CD4-positive, alpha-beta T cell (primary cell): ENCODE measurements at regions of chr19 and their contacts with region 1.

Region 1: GRCh38 chr19:2269244-2269947 is 12.6 kb downstream of the PEAK3 start:
- DNase-seq: peak; percentile 98 to 99 (median 99)
- ATAC-seq: peak; percentile 77
- H3K4me3 ChIP-seq: peak overlapping the region; percentile 98
- H3K4me3 Mint-ChIP-seq: peak overlapping the region; percentile 97
- H3K27ac ChIP-seq: peak overlapping the region; percentile 50 to 94
- H3K27ac Mint-ChIP-seq: peak overlapping the region; percentile 97
- H3K4me1 ChIP-seq: peaks cover 50% of the 10 kb centered on the region
- H3K4me1 Mint-ChIP-seq: peaks cover 30% of the 10 kb centered on the region
- H3K27me3 ChIP-seq: peaks cover 0 to 6% of the 10 kb centered on the region in 2 experiments
- H3K27me3 Mint-ChIP-seq: no peaks in the 10 kb centered on the region
- CTCF ChIP-seq: no peak

Region 2: GRCh38 chr19:1406774-1407499 is 862.5 kb before region 1 on chr19:
- CTCF ChIA-PET with region 1: no interaction called
- POLR2A ChIA-PET with region 1: no interaction called
- intact Hi-C with region 1: loop called in 1 of 2 experiments (anchors 10 kb)
- DNase-seq: peak; percentile 98 to 100 (median 99)
- ATAC-seq: peak; percentile 79
- H3K4me3 ChIP-seq: peak overlapping the region; percentile 51
- H3K4me3 Mint-ChIP-seq: peak overlapping the region; percentile 92
- H3K27ac ChIP-seq: peak overlapping the region; percentile 52 to 73
- H3K27ac Mint-ChIP-seq: peak overlapping the region; percentile 78
- H3K4me1 ChIP-seq: peaks cover 56% of the 10 kb centered on the region
- H3K4me1 Mint-ChIP-seq: peaks cover 46% of the 10 kb centered on the region
- H3K27me3 ChIP-seq: peaks cover 0 to 11% of the 10 kb centered on the region in 2 experiments
- H3K27me3 Mint-ChIP-seq: no peaks in the 10 kb centered on the region
- CTCF ChIP-seq: peak; percentile 62

Region 3: GRCh38 chr19:2157452-2157851 is 111.9 kb before region 1 on chr19:
- CTCF ChIA-PET with region 1: interaction called, 5 read pairs
- POLR2A ChIA-PET with region 1: no interaction called
- intact Hi-C with region 1: loop called in 1 of 2 experiments (anchors 2 kb)
- DNase-seq: no peak
- ATAC-seq: no peak
- H3K4me3 ChIP-seq: no peak overlapping the region
- H3K4me3 Mint-ChIP-seq: no peak overlapping the region
- H3K27ac ChIP-seq: no peak overlapping the region
- H3K27ac Mint-ChIP-seq: no peak overlapping the region
- H3K4me1 ChIP-seq: peaks cover 5% of the 10 kb centered on the region
- H3K4me1 Mint-ChIP-seq: no peaks in the 10 kb centered on the region
- H3K27me3 ChIP-seq: no peaks in the 10 kb centered on the region
- H3K27me3 Mint-ChIP-seq: no peaks in the 10 kb centered on the region
- CTCF ChIP-seq: no peak

Region 4: GRCh38 chr19:2253106-2254053 is 16.0 kb before region 1 on chr19:
- CTCF ChIA-PET with region 1: interaction called, 10 read pairs
- POLR2A ChIA-PET with region 1: interaction called, 195 read pairs
- intact Hi-C with region 1: loop called (anchors 1 to 2 kb)
- DNase-seq: peak in 10 of 14 experiments; percentile 55 to 76 (median 64)
- ATAC-seq: peak; percentile 47
- H3K4me3 ChIP-seq: peak overlapping the region; percentile 50
- H3K4me3 Mint-ChIP-seq: peak overlapping the region; percentile 80
- H3K27ac ChIP-seq: no peak overlapping the region
- H3K27ac Mint-ChIP-seq: peak overlapping the region; percentile 64
- H3K4me1 ChIP-seq: peaks cover 67% of the 10 kb centered on the region
- H3K4me1 Mint-ChIP-seq: peaks cover 17% of the 10 kb centered on the region
- H3K27me3 ChIP-seq: peaks cover 23 to 26% of the 10 kb centered on the region in 2 experiments
- H3K27me3 Mint-ChIP-seq: no peaks in the 10 kb centered on the region
- CTCF ChIP-seq: peak; percentile 70

Region 5: GRCh38 chr19:2328401-2329148 is 59.2 kb after region 1 on chr19 and contains the starts of genes LSM7 and SPPL2B:
- CTCF ChIA-PET with region 1: no interaction called
- POLR2A ChIA-PET with region 1: interaction called, 4 read pairs
- intact Hi-C with region 1: loop called in 1 of 2 experiments (anchors 5 kb)
- DNase-seq: peak; percentile 86 to 98 (median 92)
- ATAC-seq: peak; percentile 69
- H3K4me3 ChIP-seq: peak within 1 kb of the TSS; percentile 96
- H3K4me3 Mint-ChIP-seq: peak within 1 kb of the TSS; percentile 100
- H3K27ac ChIP-seq: peak within 1 kb of the TSS; percentile 57 to 78
- H3K27ac Mint-ChIP-seq: peak within 1 kb of the TSS; percentile 93
- H3K4me1 ChIP-seq: peaks cover 70% of the 10 kb centered on the region
- H3K4me1 Mint-ChIP-seq: peaks cover 74% of the 10 kb centered on the region
- H3K27me3 ChIP-seq: no peaks in the 10 kb centered on the region
- H3K27me3 Mint-ChIP-seq: no peaks in the 10 kb centered on the region
- CTCF ChIP-seq: no peak
- total RNA-seq, gene LSM7: 73.6 to 80.1 TPM
- total RNA-seq, gene SPPL2B: 106 to 111 TPM